ENCODE measurements at regions of chr2 and their contacts with region 1.

Region 1: GRCh38 chr2:101361121-101361870 is 26.0 kb downstream of the CREG2 start:
- DNase-seq: peak; percentile 72
- H3K4me3 Mint-ChIP-seq: peak overlapping the region; percentile 5
- H3K27ac Mint-ChIP-seq: peak overlapping the region; percentile 87
- H3K4me1 Mint-ChIP-seq: peaks cover 46% of the 10 kb centered on the region
- H3K27me3 Mint-ChIP-seq: peaks cover 5% of the 10 kb centered on the region

Region 2: DNA sequence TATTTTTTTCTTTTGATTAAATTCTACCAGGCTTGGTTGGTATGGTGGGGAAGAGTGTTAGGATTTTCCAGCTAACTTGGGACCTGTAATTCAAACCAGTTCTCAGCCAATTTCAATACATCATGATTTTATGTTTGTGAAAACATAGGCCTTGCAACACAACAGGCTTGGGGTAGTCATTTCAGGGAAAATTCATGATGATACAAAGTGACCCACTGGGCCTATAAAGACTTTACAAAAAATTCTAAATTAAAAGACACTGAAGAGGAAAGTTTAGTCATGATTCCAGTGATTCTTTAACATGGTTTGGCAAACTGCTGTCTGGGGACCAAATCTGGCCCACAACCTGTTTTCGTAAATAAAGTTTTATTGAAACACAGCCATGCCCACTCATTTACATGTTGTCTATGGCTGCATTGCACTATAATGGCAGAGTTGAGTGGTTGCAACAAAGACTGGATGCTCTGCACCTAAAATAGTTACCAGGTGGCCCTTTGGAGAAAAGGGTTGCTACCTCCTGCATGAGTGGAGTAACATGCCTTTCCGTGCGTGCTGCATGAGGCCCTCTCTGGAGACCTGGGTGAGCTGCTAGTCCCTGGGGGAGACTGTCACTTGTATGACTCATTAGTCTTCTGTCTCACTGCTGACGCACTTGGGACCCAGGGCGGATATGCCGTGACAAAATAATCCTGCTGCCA is 467.8 kb before region 1 on chr2:
- CTCF ChIA-PET with region 1: no interaction called
- POLR2A ChIA-PET with region 1: no interaction called
- DNase-seq: no peak
- H3K4me3 Mint-ChIP-seq: no peak overlapping the region
- H3K27ac Mint-ChIP-seq: no peak overlapping the region
- H3K4me1 Mint-ChIP-seq: no peaks in the 10 kb centered on the region
- H3K27me3 Mint-ChIP-seq: no peaks in the 10 kb centered on the region

Region 3: GRCh38 chr2:101308432-101309210 is 52.7 kb before region 1 on chr2 and contains the start of gene RNF149:
- CTCF ChIA-PET with region 1: interaction called, 15 read pairs
- POLR2A ChIA-PET with region 1: interaction called, 19 read pairs
- DNase-seq: peak; percentile 93
- H3K4me3 Mint-ChIP-seq: peak within 1 kb of the TSS; percentile 100
- H3K27ac Mint-ChIP-seq: peak within 1 kb of the TSS; percentile 97
- H3K4me1 Mint-ChIP-seq: peaks cover 69% of the 10 kb centered on the region
- H3K27me3 Mint-ChIP-seq: no peaks in the 10 kb centered on the region
- total RNA-seq, gene RNF149: 115 to 116 TPM

Region 4: GRCh38 chr2:101328474-101329007 is 32.8 kb before region 1 on chr2:
- CTCF ChIA-PET with region 1: interaction called, 5 read pairs
- POLR2A ChIA-PET with region 1: interaction called, 34 read pairs
- DNase-seq: peak; percentile 69
- H3K4me3 Mint-ChIP-seq: no peak overlapping the region
- H3K27ac Mint-ChIP-seq: no peak overlapping the region
- H3K4me1 Mint-ChIP-seq: peaks cover 10% of the 10 kb centered on the region
- H3K27me3 Mint-ChIP-seq: no peaks in the 10 kb centered on the region

Region 5: GRCh38 chr2:101341901-101342624 is 19.2 kb before region 1 on chr2:
- CTCF ChIA-PET with region 1: interaction called, 95 read pairs
- POLR2A ChIA-PET with region 1: interaction called, 14 read pairs
- DNase-seq: peak; percentile 80
- H3K4me3 Mint-ChIP-seq: no peak overlapping the region
- H3K27ac Mint-ChIP-seq: peak overlapping the region; percentile 32
- H3K4me1 Mint-ChIP-seq: peaks cover 42% of the 10 kb centered on the region
- H3K27me3 Mint-ChIP-seq: peaks cover 7% of the 10 kb centered on the region

Region 6: GRCh38 chr2:101349893-101350662 is 11.2 kb before region 1 on chr2:
- CTCF ChIA-PET with region 1: interaction called, 95 read pairs
- POLR2A ChIA-PET with region 1: interaction called, 22 read pairs
- DNase-seq: peak; percentile 46
- H3K4me3 Mint-ChIP-seq: no peak overlapping the region
- H3K27ac Mint-ChIP-seq: no peak overlapping the region
- H3K4me1 Mint-ChIP-seq: peaks cover 17% of the 10 kb centered on the region
- H3K27me3 Mint-ChIP-seq: peaks cover 17% of the 10 kb centered on the region

Region 7: GRCh38 chr2:101371636-101372035 is 10.3 kb after region 1 on chr2:
- CTCF ChIA-PET with region 1: interaction called, 11 read pairs
- POLR2A ChIA-PET with region 1: interaction called, 8 read pairs
- DNase-seq: no peak
- H3K4me3 Mint-ChIP-seq: no peak overlapping the region
- H3K27ac Mint-ChIP-seq: no peak overlapping the region
- H3K4me1 Mint-ChIP-seq: peaks cover 5% of the 10 kb centered on the region
- H3K27me3 Mint-ChIP-seq: peaks cover 3% of the 10 kb centered on the region

Region 8: DNA sequence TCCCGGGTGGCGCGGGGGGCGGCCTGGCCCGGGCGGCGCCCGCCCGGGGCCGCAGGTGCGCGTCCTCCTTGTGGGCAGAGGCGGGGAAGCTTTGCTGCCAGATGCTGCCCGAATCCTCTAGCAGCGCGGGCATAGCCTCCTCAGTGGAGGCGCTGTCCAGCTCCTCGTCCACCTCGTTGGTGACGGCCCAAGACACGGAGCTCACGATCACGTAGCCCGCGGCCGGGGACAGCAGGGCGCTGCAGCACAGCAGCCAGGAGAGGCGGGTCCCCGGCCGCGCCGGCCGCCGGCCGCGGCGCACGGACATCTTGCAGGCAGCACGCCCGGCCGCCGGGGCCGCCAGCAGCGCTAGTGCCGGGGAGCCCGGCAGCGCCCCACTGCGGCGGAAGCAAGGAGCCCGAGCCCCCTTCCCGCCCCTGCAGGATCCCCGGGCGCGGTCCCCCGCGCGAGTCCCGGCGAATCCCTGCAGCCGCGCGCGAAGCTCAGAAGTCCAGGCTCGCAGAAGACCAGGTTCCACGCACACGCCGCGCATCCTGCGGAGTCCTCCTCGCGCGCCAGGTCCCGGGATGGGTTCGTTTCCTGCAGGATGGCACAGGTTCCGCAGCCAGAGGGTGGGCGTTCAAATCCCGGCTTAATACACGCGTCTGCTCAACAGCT is 26.0 kb after region 1 on chr2 and contains the start of gene CREG2:
- CTCF ChIA-PET with region 1: interaction called, 60 read pairs
- POLR2A ChIA-PET with region 1: interaction called, 9 read pairs
- DNase-seq: peak; percentile 69
- H3K4me3 Mint-ChIP-seq: peak within 1 kb of the TSS; percentile 60
- H3K27ac Mint-ChIP-seq: no peak within 1 kb of the TSS
- H3K4me1 Mint-ChIP-seq: peaks cover 11% of the 10 kb centered on the region
- H3K27me3 Mint-ChIP-seq: peaks cover 58% of the 10 kb centered on the region
- total RNA-seq, gene CREG2: 0.65 to 0.98 TPM

Measured in activated CD4-positive, alpha-beta memory T cell treated with anti-CD3 and anti-CD28 coated beads, Interleukin-2, amount 10 ng/mL, durations not matched to agents 7 days and 5 days (primary cell).